ENCODE measurements at regions of chr19 and their contacts with region 1.

Region 1: GRCh38 chr19:47618771-47619170 is 9.8 kb downstream of the BICRA start:
- DNase-seq: peak; percentile 84
- ATAC-seq: peak; percentile 88 to 89

Region 2: DNA sequence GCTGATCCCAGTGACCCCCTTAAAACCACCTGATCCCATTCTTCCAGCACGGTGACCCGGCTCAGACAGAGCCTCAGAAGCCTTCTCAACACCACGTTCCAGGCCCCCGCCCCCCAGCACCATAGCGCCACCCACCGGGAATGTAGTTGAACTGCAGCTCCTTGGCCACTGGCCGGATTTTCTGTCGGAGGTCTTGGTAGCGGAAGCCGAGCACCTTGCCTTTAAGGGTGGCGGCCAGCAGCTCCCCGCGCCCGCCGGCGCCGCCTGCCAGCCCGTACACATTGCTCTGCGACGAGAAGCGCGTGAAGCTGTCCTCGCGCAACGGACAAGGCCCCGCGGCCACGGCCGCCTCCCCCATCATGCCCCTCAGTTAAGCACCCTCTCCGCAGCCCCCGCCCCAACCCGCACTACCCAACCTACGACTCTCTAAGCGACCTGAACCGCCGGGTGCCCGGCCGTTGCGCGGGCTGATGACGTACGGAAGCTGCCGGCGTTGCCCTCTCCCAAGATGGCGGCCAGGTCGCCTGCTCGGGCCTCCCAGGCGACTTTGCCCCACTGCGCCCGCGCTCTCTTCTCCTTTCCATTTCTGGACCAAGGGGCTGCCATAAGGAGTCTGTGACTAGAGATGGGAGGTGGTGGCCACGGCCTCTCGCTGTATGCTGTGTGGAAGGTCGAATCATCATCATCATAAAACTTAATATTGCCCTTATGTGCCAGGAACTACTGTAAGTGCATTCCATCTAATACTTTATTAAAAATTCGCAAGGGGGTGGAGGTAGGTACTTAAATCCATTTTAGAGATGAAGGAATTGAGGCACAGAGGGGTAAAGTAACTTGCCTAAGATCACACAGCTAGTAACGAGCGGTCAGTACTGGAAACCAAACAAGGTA is 134.7 kb before region 1 on chr19 and contains the start of gene KPTN:
- intact Hi-C with region 1: no loop called
- DNase-seq: peak; percentile 92
- ATAC-seq: peak; percentile 89 to 92
- total RNA-seq, gene KPTN: 6.9 to 10.5 TPM

Region 3: GRCh38 chr19:47561440-47562057 is 57.2 kb before region 1 on chr19:
- intact Hi-C with region 1: no loop called
- DNase-seq: no peak
- ATAC-seq: no peak

Region 4: GRCh38 chr19:47663841-47664771 is 45.3 kb after region 1 on chr19:
- intact Hi-C with region 1: loop called in 1 of 2 experiments (anchors 5 kb)
- DNase-seq: peak; percentile 86
- ATAC-seq: peak; percentile 78 to 88

Region 5: GRCh38 chr19:47719047-47719859 is 100.5 kb after region 1 on chr19:
- intact Hi-C with region 1: no loop called
- DNase-seq: peak; percentile 90
- ATAC-seq: peak; percentile 82 to 83

Region 6: DNA sequence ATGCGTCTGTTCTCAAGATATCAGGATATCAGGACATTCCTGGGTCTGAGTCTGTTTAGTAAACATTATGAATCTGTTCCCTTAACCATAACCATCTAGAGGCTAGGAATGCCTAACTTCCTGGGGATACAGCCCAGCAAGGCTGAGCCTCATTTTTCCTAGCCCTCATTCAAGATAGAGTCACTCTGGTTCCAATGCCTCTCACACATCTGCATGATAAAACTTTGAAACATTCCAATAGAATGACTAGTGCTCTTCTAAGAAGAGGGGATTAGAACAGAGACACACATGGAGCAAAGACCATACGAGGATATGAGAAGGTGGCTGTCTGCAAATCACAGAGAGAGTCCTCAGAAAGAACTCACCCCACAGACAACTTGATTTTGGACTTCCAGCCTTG is 445.7 kb after region 1 on chr19:
- intact Hi-C with region 1: no loop called
- DNase-seq: no peak
- ATAC-seq: no peak